ENCODE measurements at regions of chr5 and their contacts with region 1.

Region 1: GRCh38 chr5:95712347-95712958 is 18.7 kb upstream of the RHOBTB3 start:
- DNase-seq: peak; percentile 74
- H3K4me3 Mint-ChIP-seq: no peak overlapping the region
- H3K27ac Mint-ChIP-seq: no peak overlapping the region
- H3K4me1 Mint-ChIP-seq: peaks cover 22% of the 10 kb centered on the region
- H3K27me3 Mint-ChIP-seq: peaks cover 9% of the 10 kb centered on the region

Region 2: GRCh38 chr5:95760273-95761191 is 48.1 kb after region 1 on chr5:
- CTCF ChIA-PET with region 1: no interaction called
- POLR2A ChIA-PET with region 1: interaction called, 3 read pairs
- intact Hi-C with region 1: loop called (anchors 1 kb)
- DNase-seq: no peak
- H3K4me3 Mint-ChIP-seq: peak overlapping the region; percentile 57
- H3K27ac Mint-ChIP-seq: peak overlapping the region; percentile 64
- H3K4me1 Mint-ChIP-seq: peaks cover 23% of the 10 kb centered on the region
- H3K27me3 Mint-ChIP-seq: peaks cover 4% of the 10 kb centered on the region